ENCODE measurements at regions of chr3 and their contacts with region 1.

Region 1: GRCh38 chr3:194103983-194104751 is 31.8 kb upstream of the HES1 start:
- DNase-seq: peak; percentile 42 to 72
- H3K4me3 ChIP-seq: no peak overlapping the region
- H3K27ac ChIP-seq: no peak overlapping the region
- H3K4me1 ChIP-seq: peaks cover 18% of the 10 kb centered on the region
- H3K27me3 ChIP-seq: no peaks in the 10 kb centered on the region
- CTCF ChIP-seq: no peak

Region 2: GRCh38 chr3:194129581-194130133 is 25.5 kb after region 1 on chr3:
- CTCF ChIA-PET with region 1: interaction called, 18 read pairs
- POLR2A ChIA-PET with region 1: interaction called, 3 read pairs
- intact Hi-C with region 1: no loop called
- DNase-seq: no peak
- H3K4me3 ChIP-seq: no peak overlapping the region
- H3K27ac ChIP-seq: no peak overlapping the region
- H3K4me1 ChIP-seq: peaks cover 52% of the 10 kb centered on the region
- H3K27me3 ChIP-seq: no peaks in the 10 kb centered on the region
- CTCF ChIP-seq: no peak

Measured in PC-9 (cell line).